A549 (cell line): ENCODE measurements at regions of chr6 and their contacts with region 1.

Region 1: GRCh38 chr6:30914076-30914853 is at the start of gene VARS2:
- DNase-seq: peak; percentile 86 to 88
- ATAC-seq: peak; percentile 87 to 93
- H3K4me3 ChIP-seq: peak within 1 kb of the TSS; percentile 60
- H3K27ac ChIP-seq: peak within 1 kb of the TSS; percentile 97
- H3K4me1 ChIP-seq: peaks cover 19% of the 10 kb centered on the region
- CTCF ChIP-seq: peak; percentile 44; the same call in 2 of the 3 replicates
- EP300 ChIP-seq: no peak
- POLR2A ChIP-seq: peak; percentile 68
- RAD21 ChIP-seq: peak; percentile 33 to 56
- polyA plus RNA-seq, gene VARS2: 15.5 and 16.1 TPM in 2 replicates

Region 2: GRCh38 chr6:30821862-30822782 is 92.1 kb before region 1 on chr6:
- CTCF ChIA-PET with region 1: interaction called, 38 read pairs
- POLR2A ChIA-PET with region 1: interaction called, 4 read pairs
- DNase-seq: peak; percentile 44 to 48
- ATAC-seq: peak; percentile 46 to 61; a peak in 3 of 6 replicates
- H3K4me3 ChIP-seq: no peak overlapping the region
- H3K27ac ChIP-seq: peak overlapping the region; percentile 81 to 90
- H3K4me1 ChIP-seq: peaks cover 62% of the 10 kb centered on the region
- CTCF ChIP-seq: peak; percentile 54
- EP300 ChIP-seq: no peak
- POLR2A ChIP-seq: no peak
- RAD21 ChIP-seq: peak; percentile 35 to 43; a peak in 2 of 5 replicates

Region 3: DNA sequence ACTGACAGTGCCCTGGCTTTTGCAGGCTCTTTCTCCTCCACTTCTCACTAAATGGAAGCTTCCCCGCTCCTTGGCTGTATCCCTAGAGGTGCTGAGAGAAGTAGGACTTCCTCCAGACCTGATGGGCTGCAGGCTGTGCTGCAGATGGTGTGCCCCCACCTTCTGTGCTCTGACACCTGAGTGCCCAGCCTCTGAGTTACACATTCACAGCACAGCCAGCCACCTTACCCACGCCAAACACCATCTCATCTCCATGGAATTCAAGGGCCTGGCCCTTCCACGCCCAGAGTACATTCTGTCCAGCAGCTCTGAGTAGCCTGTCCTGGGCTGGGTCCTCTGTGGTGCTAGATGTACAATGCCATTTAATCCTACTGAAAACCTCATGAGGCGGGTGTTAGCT is 12.4 kb after region 1 on chr6:
- CTCF ChIA-PET with region 1: interaction called, 51 read pairs
- POLR2A ChIA-PET with region 1: no interaction called
- DNase-seq: peak in 1 of 2 experiments; percentile 30
- ATAC-seq: peak; percentile 42 to 65; a peak in 4 of 6 replicates
- H3K4me3 ChIP-seq: no peak overlapping the region
- H3K27ac ChIP-seq: peak overlapping the region in 1 of 2 experiments; percentile 66; a peak in 1 of 6 replicates
- H3K4me1 ChIP-seq: peaks cover 11% of the 10 kb centered on the region; the same call in 1 of the 3 replicates
- CTCF ChIP-seq: no peak
- EP300 ChIP-seq: no peak
- POLR2A ChIP-seq: no peak
- RAD21 ChIP-seq: no peak

Region 4: GRCh38 chr6:31042806-31043205 is 128.5 kb after region 1 on chr6:
- CTCF ChIA-PET with region 1: interaction called, 20 read pairs
- POLR2A ChIA-PET with region 1: no interaction called
- DNase-seq: peak; percentile 49 to 71
- ATAC-seq: peak; percentile 67 to 85; a peak in 4 of 6 replicates
- H3K4me3 ChIP-seq: no peak overlapping the region
- H3K27ac ChIP-seq: peak overlapping the region; percentile 86 to 87; a peak in 5 of 6 replicates
- H3K4me1 ChIP-seq: peaks cover 14% of the 10 kb centered on the region
- CTCF ChIP-seq: peak; percentile 40
- EP300 ChIP-seq: no peak
- POLR2A ChIP-seq: no peak
- RAD21 ChIP-seq: peak; percentile 52 to 57

Region 5: GRCh38 chr6:31068669-31069340 is 154.5 kb after region 1 on chr6:
- CTCF ChIA-PET with region 1: interaction called, 143 read pairs
- POLR2A ChIA-PET with region 1: interaction called, 10 read pairs
- DNase-seq: peak; percentile 59 to 80
- ATAC-seq: peak; percentile 90 to 95
- H3K4me3 ChIP-seq: no peak overlapping the region
- H3K27ac ChIP-seq: no peak overlapping the region
- H3K4me1 ChIP-seq: peaks cover 12% of the 10 kb centered on the region
- CTCF ChIP-seq: peak; percentile 62
- EP300 ChIP-seq: no peak
- POLR2A ChIP-seq: no peak
- RAD21 ChIP-seq: peak; percentile 65 to 66

Region 6: DNA sequence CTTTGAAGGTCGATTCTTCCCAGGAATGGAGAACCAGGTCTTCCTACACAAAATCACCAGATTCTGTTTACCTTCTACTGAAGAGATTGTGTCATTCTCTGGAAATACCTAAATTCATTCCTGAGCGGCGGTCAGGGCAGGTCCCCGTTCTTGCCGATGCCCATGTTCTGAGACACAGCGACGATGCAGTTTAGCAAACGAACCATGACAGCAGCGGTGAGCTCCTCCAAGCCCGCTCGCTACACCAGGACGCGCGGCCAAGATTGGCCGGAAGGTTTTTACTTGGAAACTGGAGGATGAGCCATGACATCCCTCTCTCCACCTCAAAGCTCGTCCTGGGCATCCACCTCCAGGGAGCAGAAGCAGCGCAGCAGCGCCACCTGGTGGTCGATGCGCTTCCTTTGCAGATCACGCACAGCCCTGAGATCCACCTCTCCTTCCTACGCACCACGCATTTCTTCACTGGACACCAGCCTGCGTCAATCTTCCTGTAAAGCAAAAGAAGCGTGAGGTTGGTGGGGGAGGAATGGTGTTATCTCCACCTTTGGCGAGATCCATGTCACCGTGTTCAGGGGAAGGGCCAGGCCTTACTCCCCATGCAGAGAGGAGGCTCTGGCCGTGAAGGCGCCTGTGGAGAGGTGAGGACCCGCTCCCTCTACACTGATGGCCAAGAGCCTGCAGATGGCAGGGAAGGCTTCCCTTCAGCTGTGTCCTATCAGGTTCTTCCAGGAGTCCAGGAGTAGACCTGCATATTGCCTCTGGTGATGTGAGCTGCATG is 452.6 kb after region 1 on chr6:
- CTCF ChIA-PET with region 1: no interaction called
- POLR2A ChIA-PET with region 1: no interaction called
- DNase-seq: peak; percentile 78 to 84
- ATAC-seq: peak; percentile 99 to 100
- H3K4me3 ChIP-seq: peak overlapping the region; percentile 40
- H3K27ac ChIP-seq: no peak overlapping the region
- H3K4me1 ChIP-seq: no peaks in the 10 kb centered on the region
- CTCF ChIP-seq: peak; percentile 84
- EP300 ChIP-seq: no peak
- POLR2A ChIP-seq: no peak
- RAD21 ChIP-seq: peak; percentile 86 to 89